Naive thymus-derived CD4-positive, alpha-beta T cell (primary cell): ENCODE measurements at regions of chr11 and their contacts with region 1.

Region 1: DNA sequence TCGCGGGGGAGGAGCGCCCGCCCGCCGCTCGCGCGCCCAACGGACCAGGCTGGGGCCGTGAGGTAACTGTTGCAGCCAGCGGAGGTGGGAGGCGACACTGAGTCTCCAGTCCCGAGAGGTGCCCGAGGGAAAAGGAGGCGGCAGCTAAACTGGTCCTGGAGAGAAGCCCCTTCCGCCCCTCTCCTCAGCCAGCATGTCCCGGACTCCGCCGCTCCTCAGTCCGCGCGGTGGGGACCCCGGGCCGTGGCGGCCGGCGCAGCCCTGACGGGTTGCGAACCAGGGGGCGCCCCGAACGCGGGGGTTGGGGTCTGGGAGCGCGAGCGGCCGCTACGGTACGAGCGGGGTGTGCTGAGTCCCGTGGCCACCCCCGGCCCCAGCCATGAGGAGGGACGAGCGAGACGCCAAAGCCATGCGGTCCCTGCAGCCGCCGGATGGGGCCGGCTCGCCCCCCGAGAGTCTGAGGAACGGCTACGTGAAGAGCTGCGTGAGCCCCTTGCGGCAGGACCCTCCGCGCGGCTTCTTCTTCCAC is at the start of gene PDE3B:
- DNase-seq: peak; percentile 45 to 79 (median 61)
- ATAC-seq: peak; percentile 78
- H3K4me3 ChIP-seq: peak within 1 kb of the TSS; percentile 68
- H3K4me3 Mint-ChIP-seq: peak within 1 kb of the TSS; percentile 90 to 99 (median 94)
- H3K27ac ChIP-seq: peak within 1 kb of the TSS; percentile 89
- H3K27ac Mint-ChIP-seq: peak within 1 kb of the TSS; percentile 69 to 95 (median 92)
- H3K4me1 ChIP-seq: peaks cover 26 to 33% of the 10 kb centered on the region in 2 donors
- H3K4me1 Mint-ChIP-seq: peaks cover 22 to 65% (median 49%) of the 10 kb centered on the region in 7 donors
- H3K27me3 ChIP-seq: no peaks in the 10 kb centered on the region
- H3K27me3 Mint-ChIP-seq: no peaks in the 10 kb centered on the region
- total RNA-seq, gene PDE3B: 79.6 to 268 (median 151) TPM

Region 2: DNA sequence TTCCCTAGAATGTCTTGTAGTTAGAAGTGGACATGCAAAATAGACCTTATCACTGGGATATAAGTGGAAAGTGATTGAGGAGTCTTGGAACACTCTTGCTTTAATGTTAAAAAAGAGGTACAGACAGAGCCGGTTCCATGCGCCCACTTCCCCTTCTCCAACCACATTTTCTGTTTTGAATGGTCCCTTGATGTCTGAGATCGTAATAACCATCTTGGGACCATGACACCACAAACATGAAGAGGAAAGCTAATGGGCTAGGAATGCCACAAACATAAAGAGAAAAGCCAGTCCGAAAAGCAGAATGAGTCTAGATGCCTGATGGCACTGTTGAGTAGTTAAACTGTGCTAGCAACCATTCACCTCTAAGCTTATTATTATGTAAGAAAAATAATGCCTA is 736.1 kb before region 1 on chr11:
- CTCF ChIA-PET with region 1: no interaction called
- POLR2A ChIA-PET with region 1: no interaction called
- intact Hi-C with region 1: no loop called
- DNase-seq: no peak
- ATAC-seq: no peak
- H3K4me3 ChIP-seq: no peak overlapping the region
- H3K4me3 Mint-ChIP-seq: no peak overlapping the region
- H3K27ac ChIP-seq: no peak overlapping the region
- H3K27ac Mint-ChIP-seq: no peak overlapping the region
- H3K4me1 ChIP-seq: no peaks in the 10 kb centered on the region
- H3K4me1 Mint-ChIP-seq: no peaks in the 10 kb centered on the region
- H3K27me3 ChIP-seq: peaks cover 0 to 4% of the 10 kb centered on the region in 2 donors
- H3K27me3 Mint-ChIP-seq: peaks cover 0 to 30% (median 0%) of the 10 kb centered on the region in 5 donors

Region 3: GRCh38 chr11:14499554-14500180 is 144.1 kb before region 1 on chr11 and contains the start of gene COPB1:
- CTCF ChIA-PET with region 1: no interaction called
- POLR2A ChIA-PET with region 1: interaction called, 6 read pairs
- intact Hi-C with region 1: loop called (anchors 1 kb)
- DNase-seq: peak; percentile 82 to 94 (median 92)
- ATAC-seq: peak; percentile 99
- H3K4me3 ChIP-seq: peak within 1 kb of the TSS; percentile 70
- H3K4me3 Mint-ChIP-seq: peak within 1 kb of the TSS; percentile 79 to 98 (median 92)
- H3K27ac ChIP-seq: peak within 1 kb of the TSS; percentile 91
- H3K27ac Mint-ChIP-seq: peak within 1 kb of the TSS; percentile 87 to 98 (median 94)
- H3K4me1 ChIP-seq: peaks cover 0 to 21% of the 10 kb centered on the region in 2 donors
- H3K4me1 Mint-ChIP-seq: peaks cover 27 to 54% (median 47%) of the 10 kb centered on the region in 7 donors
- H3K27me3 ChIP-seq: no peaks in the 10 kb centered on the region
- H3K27me3 Mint-ChIP-seq: no peaks in the 10 kb centered on the region
- total RNA-seq, gene COPB1: 73.4 to 102 (median 75.9) TPM

Region 4: DNA sequence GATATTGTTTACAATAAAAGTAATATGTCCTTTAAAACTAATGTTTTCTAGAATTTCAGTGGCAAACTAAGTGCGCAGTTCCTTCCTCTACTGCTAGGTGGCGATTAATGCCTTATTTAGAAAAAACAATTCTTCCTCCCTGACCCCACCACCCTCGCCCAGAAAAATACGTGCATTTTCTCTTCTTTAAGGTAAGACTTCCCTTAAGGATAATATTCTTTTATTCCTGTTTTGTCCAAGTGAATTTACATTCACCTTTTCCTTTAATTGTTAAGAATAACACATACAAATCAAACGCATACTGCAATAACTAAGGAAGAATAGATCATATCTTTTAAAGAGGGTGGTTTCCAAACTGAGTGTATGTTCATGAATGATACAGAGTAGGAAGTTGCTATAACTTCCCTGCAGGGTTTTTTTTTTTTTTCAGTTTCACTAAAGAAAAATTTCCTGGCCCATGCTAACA is 106.6 kb before region 1 on chr11:
- CTCF ChIA-PET with region 1: interaction called, 8 read pairs
- POLR2A ChIA-PET with region 1: interaction called, 9 read pairs
- intact Hi-C with region 1: loop called (anchors 1 kb)
- DNase-seq: peak in 7 of 9 donors; percentile 39 to 74 (median 69)
- ATAC-seq: peak; percentile 93
- H3K4me3 ChIP-seq: no peak overlapping the region
- H3K4me3 Mint-ChIP-seq: peak overlapping the region in 9 of 10 donors; percentile 48 to 86 (median 79)
- H3K27ac ChIP-seq: peak overlapping the region; percentile 69
- H3K27ac Mint-ChIP-seq: peak overlapping the region; percentile 77 to 99 (median 90)
- H3K4me1 ChIP-seq: peaks cover 0 to 17% of the 10 kb centered on the region in 2 donors
- H3K4me1 Mint-ChIP-seq: peaks cover 9 to 51% (median 45%) of the 10 kb centered on the region in 7 donors
- H3K27me3 ChIP-seq: no peaks in the 10 kb centered on the region
- H3K27me3 Mint-ChIP-seq: no peaks in the 10 kb centered on the region

Region 5: GRCh38 chr11:14625586-14626205 is 18.1 kb before region 1 on chr11:
- CTCF ChIA-PET with region 1: interaction called, 19 read pairs
- POLR2A ChIA-PET with region 1: interaction called, 15 read pairs
- intact Hi-C with region 1: loop called in 1 of 2 experiments (anchors 2 kb)
- DNase-seq: no peak
- ATAC-seq: peak; percentile 24
- H3K4me3 ChIP-seq: no peak overlapping the region
- H3K4me3 Mint-ChIP-seq: peak overlapping the region; percentile 1 to 75 (median 52)
- H3K27ac ChIP-seq: no peak overlapping the region
- H3K27ac Mint-ChIP-seq: peak overlapping the region; percentile 1 to 86 (median 71)
- H3K4me1 ChIP-seq: peaks cover 4 to 27% of the 10 kb centered on the region in 2 donors
- H3K4me1 Mint-ChIP-seq: peaks cover 26 to 69% (median 64%) of the 10 kb centered on the region in 7 donors
- H3K27me3 ChIP-seq: no peaks in the 10 kb centered on the region
- H3K27me3 Mint-ChIP-seq: no peaks in the 10 kb centered on the region

Region 6: DNA sequence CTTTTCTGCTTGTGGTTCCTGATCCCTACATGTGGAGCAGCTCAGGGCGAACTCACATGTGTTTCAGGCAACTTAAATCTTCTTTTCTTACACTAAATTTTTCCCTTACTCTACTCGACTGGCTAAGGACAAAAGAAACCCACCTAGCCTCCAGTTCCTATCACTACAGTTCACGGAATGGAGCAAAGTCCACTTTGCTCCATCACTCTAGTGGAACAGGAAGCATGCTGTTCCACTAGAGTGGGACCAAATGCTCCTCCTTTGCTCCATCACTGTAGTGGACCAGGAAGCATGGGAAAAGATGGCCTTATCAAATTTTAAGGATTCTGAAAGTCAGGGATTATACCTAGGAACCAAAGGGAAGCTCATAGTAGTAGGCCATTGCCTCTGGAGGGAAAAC is 35.9 kb after region 1 on chr11:
- CTCF ChIA-PET with region 1: interaction called, 3 read pairs
- POLR2A ChIA-PET with region 1: interaction called, 7 read pairs
- intact Hi-C with region 1: loop called in 1 of 2 experiments (anchors 5 kb)
- DNase-seq: no peak
- ATAC-seq: no peak
- H3K4me3 ChIP-seq: no peak overlapping the region
- H3K4me3 Mint-ChIP-seq: peak overlapping the region in 1 of 10 donors; percentile 27
- H3K27ac ChIP-seq: no peak overlapping the region
- H3K27ac Mint-ChIP-seq: peak overlapping the region in 3 of 9 donors; percentile 2 to 69 (median 53)
- H3K4me1 ChIP-seq: peaks cover 0 to 11% of the 10 kb centered on the region in 2 donors
- H3K4me1 Mint-ChIP-seq: peaks cover 13 to 95% (median 73%) of the 10 kb centered on the region in 7 donors
- H3K27me3 ChIP-seq: no peaks in the 10 kb centered on the region
- H3K27me3 Mint-ChIP-seq: no peaks in the 10 kb centered on the region